ENCODE measurements at regions of chr14 and their contacts with region 1.

Region 1: DNA sequence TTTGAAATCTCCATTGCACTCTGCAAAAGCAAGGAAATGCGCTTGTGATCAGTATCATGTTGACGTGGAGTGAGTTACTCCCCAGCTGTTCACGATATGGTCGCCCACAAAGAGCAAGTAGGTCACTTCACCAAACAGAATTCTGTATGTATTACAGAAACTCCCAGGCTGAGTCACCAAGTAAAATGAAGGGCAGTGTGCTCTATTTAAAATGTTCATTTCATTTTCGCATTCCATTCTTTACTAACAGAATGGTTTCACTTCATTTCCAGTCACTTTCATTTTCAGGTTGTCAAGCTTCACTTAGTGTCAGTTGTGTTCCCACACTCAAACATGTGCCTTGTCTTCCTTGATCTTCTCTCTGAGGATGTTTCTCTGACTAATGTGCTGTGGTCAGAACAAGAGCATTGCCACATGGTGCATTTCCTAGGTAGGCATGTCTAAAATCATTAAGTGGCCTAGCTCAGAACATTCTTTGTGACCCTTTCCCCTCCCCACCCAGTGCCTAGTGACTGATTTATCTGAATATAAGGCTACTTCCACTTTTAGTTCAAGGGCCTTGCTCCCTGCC is 391.2 kb downstream of the RAD51B start:
- DNase-seq: peak in 3 of 5 donors; percentile 16 to 33 (median 31)
- ATAC-seq: peak; percentile 32 to 92 (median 84)
- H3K4me3 ChIP-seq: peak overlapping the region in 7 of 12 donors; percentile 6 to 43 (median 18)
- H3K27ac ChIP-seq: peak overlapping the region in 11 of 12 donors; percentile 36 to 86 (median 63)
- H3K4me1 ChIP-seq: peaks cover 0 to 47% (median 13%) of the 10 kb centered on the region in 12 donors
- H3K27me3 ChIP-seq: no peaks in the 10 kb centered on the region
- CTCF ChIP-seq: no peak
- POLR2A ChIP-seq: no peak

Region 2: DNA sequence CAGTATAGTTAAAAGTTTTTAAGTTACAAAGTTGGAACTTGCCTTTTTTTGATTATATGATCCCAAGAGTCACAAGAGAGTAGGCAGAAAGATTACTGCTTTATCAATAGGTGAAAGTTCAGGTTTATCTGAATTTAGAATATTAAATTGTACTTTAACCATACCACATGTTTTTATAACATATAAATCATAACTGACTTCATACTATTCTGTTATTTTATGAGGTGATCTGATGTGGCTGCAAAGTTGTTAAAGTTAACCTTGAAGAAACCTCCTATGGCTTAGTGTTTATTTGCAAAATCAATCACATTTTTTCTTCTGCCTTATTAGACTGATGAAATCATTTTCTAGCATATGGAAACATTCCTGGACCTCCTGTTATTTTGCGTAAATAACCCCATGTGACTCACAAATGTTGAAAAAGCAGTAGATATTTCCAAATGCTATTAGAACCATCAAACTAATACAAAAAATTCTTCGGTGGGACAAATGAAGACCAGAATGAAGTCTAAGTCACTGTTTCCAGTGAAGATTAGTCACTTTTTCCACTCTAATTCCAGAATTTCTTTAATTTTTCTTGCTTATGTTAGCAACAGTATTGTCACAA is 259.2 kb before region 1 on chr14:
- intact Hi-C with region 1: loop called in 1 of 10 experiments (anchors 10 kb)
- DNase-seq: no peak
- ATAC-seq: no peak
- H3K4me3 ChIP-seq: no peak overlapping the region
- H3K27ac ChIP-seq: no peak overlapping the region
- H3K4me1 ChIP-seq: no peaks in the 10 kb centered on the region
- H3K27me3 ChIP-seq: no peaks in the 10 kb centered on the region
- CTCF ChIP-seq: no peak
- POLR2A ChIP-seq: no peak

Measured in heart left ventricle (tissue), 16 donors.